ENCODE measurements at regions of chr14 and their contacts with region 1.

Region 1: DNA sequence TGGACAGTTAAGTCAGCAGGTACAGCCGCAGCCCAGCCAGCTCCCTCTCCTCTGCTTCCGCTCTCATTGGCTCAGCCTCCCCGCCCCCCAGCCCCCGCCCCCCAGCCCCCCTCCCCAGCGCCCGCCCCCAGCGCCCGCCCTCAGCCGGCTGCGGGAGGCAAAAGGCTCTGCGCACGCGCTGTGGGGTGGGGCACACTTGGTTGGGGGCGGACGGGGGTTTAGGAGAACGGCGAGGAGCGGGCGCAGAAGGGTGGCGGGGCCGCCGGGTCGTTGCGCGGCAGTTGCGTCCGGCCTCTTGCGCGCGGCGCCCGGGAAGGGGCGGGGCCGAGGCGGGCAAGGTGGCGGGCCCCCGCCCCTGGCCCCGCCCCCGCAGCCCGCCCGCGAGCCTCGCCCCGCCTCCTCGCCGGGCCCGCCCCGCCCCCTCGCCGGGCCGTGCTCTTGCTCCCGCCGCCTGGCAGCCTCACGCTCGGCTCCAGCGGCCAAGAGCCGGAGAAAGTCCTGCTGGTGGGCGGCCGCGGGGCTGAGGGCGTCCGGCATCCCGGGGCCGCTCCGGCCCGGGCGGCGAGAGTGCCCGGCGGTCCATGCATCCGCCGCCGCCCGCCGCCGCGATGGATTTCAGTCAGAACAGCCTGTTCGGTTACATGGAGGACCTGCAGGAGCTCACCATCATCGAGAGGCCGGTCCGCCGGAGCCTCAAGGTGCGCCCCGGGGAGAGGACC is at the start of gene PPP4R4:
- DNase-seq: peak; percentile 90
- H3K4me3 ChIP-seq: peak within 1 kb of the TSS; percentile 48 to 63 (median 61)
- H3K27ac ChIP-seq: peak within 1 kb of the TSS in 3 of 4 donors; percentile 27 to 51 (median 36)
- H3K4me1 ChIP-seq: peaks cover 0 to 22% (median 21%) of the 10 kb centered on the region in 4 donors
- H3K27me3 ChIP-seq: peaks cover 9 to 48% (median 38%) of the 10 kb centered on the region in 3 donors
- CTCF ChIP-seq: no peak
- EP300 ChIP-seq: no peak
- POLR2A ChIP-seq: no peak
- total RNA-seq, gene PPP4R4: 0.27 to 3.0 (median 0.69) TPM

Region 2: DNA sequence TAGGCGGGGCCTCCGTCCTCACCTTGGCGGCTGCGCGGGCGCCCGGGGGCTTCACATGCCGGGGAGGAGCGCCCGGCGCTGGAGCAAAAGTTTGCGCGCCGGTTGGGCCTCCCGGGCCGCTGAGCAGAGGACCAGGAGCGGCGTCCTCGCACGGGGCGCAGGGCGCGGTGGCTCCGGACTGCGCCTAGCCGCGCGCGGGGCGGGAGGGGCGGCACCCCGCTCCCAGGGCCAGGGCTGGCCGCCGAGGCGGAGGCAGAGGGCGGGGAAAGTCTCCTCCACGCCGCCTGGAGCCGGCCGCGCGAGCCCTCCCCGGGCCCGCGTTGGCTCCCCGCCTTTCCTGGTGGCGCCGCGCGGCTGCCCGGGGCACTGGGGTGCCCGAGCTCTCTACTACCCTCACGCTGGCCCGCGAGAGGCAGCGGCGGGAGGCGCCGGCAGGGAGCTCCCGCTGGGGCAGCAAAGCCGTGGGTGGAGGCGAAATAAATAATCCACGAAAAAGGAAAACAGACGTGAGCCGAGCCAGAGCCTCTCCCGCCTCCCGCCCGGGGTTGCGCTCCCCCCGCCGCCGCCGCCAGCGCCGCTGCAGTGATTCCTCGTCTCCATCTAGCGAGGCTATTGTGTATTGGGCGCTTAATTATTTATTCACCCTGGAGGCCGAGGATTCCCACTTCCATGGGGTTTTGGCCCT is 385.4 kb before region 1 on chr14:
- intact Hi-C with region 1: loop called (anchors 10 kb)
- DNase-seq: peak; percentile 88
- H3K4me3 ChIP-seq: peak overlapping the region; percentile 62 to 80 (median 70)
- H3K27ac ChIP-seq: peak overlapping the region; percentile 76 to 90 (median 90)
- H3K4me1 ChIP-seq: peaks cover 0 to 56% (median 37%) of the 10 kb centered on the region in 4 donors
- H3K27me3 ChIP-seq: no peaks in the 10 kb centered on the region
- CTCF ChIP-seq: peak; percentile 15 to 64 (median 53)
- EP300 ChIP-seq: no peak
- POLR2A ChIP-seq: no peak

Region 3: DNA sequence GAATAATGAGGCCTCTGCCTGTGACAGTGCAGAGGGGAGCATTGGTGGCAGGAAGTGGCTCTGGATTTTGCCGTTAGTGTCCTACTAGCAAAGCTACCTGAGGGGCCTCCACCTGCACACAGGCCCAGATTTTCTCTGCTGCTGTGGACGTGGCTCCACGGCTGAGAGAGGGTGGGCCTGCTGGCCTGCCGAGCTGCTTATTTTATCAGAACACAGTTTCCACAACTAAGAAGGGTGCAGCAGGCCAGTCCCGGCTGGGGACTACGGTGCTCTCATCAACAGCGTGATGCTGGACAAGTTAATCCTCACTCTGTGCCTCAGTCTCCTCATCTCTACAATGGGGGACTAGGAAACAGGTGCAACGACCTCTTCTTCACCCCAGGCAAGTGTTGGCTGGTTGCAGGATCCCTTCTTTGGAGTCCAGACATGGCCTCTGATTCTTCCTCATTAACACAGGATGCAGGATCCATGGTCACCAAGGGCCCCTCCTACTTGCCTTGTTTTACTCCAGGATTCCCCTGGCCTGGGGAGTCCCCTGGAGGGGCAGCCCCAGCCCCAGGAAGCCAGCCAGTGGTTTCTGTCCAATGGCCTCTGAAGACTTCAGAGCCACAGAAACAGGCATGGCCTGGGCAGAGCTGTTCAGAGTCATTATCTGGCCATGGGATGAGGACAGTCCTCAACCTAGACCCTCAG is 243.6 kb before region 1 on chr14:
- intact Hi-C with region 1: loop called (anchors 5 kb)
- DNase-seq: no peak
- H3K4me3 ChIP-seq: no peak overlapping the region
- H3K27ac ChIP-seq: no peak overlapping the region
- H3K4me1 ChIP-seq: peaks cover 0 to 34% (median 10%) of the 10 kb centered on the region in 4 donors
- H3K27me3 ChIP-seq: no peaks in the 10 kb centered on the region
- CTCF ChIP-seq: no peak
- EP300 ChIP-seq: no peak
- POLR2A ChIP-seq: no peak

Region 4: DNA sequence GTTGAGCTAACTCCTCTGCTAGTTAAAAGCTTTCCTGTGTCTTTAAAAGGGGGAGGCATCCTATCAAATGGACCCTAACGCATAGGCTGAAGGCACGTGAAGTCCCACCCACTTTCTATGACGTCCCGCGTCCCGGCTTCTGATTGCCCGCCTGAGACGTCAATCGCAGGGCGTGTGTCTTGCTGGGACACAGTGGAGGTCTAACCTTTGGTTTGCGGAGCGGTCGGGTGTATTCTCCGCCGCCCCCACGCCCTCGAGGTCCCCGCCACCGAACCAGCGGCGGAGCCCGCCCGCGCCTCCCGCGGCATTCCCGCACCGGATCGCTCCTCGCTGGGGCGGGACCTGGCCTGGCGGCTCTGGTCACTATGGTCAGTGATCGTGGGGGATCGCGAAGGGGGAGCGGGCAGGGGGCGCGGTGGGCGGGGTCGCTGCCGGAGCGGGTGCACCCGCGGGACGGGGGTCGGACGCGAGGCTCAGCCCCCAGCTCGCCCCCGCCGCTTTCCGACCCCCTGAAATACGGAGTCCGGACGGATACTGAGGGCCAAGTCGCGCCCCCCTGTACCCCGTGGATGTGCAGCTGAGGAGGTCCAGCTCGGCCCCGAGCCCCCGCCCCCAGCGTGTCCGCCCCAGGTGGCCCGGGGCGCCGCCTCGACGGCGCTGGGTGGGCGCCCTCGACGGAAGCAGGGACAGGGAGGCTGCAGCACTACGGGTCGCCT is 147.7 kb before region 1 on chr14 and contains the start of gene OTUB2:
- intact Hi-C with region 1: loop called (anchors 5 kb)
- DNase-seq: peak; percentile 98
- H3K4me3 ChIP-seq: peak within 1 kb of the TSS; percentile 67 to 84 (median 74)
- H3K27ac ChIP-seq: peak within 1 kb of the TSS in 2 of 4 donors; percentile 14 to 16
- H3K4me1 ChIP-seq: peaks cover 0 to 16% (median 10%) of the 10 kb centered on the region in 4 donors
- H3K27me3 ChIP-seq: no peaks in the 10 kb centered on the region
- CTCF ChIP-seq: no peak
- EP300 ChIP-seq: no peak
- POLR2A ChIP-seq: no peak
- total RNA-seq, gene OTUB2: 0.14 to 0.71 (median 0.52) TPM

Region 5: DNA sequence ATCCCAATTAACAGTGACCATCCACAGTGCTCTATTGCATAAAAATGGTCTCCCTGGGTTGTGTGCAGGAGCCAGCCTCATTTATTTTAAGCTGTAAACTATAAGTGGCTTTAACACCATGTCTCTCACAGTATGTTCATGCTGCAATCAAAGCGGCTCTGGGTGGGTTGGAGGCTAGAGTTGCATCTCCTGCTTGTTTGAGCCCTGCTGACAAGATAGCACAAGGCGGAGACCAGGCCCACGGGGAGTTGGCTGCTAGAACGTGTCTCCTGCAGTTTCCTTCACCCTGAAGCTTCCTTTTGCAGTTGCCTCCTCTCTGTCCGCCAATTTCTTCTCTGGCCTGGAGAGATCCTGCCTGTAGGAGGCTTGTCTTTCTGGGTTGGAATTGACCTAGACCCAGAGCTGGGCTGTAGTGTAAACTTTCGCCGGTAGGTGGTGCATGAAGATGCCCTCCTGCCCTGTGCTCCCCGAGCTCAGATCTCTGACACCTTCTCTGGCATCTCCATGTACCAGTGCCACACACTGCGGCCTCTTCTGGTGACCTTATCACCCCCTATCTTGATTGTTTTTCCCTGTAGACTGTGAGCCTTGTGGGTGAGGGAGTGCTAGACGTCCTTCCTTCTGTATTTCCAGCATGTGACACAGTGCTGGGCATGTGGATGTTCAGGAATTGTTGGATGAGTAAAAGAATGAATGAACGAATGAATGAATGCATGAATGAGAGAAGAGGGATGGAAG is 137.6 kb before region 1 on chr14:
- intact Hi-C with region 1: loop called (anchors 5 kb)
- DNase-seq: no peak
- H3K4me3 ChIP-seq: no peak overlapping the region
- H3K27ac ChIP-seq: no peak overlapping the region
- H3K4me1 ChIP-seq: peaks cover 0 to 6% (median 2%) of the 10 kb centered on the region in 4 donors
- H3K27me3 ChIP-seq: no peaks in the 10 kb centered on the region
- CTCF ChIP-seq: peak; percentile 67 to 88 (median 74)
- EP300 ChIP-seq: no peak
- POLR2A ChIP-seq: no peak

Region 6: DNA sequence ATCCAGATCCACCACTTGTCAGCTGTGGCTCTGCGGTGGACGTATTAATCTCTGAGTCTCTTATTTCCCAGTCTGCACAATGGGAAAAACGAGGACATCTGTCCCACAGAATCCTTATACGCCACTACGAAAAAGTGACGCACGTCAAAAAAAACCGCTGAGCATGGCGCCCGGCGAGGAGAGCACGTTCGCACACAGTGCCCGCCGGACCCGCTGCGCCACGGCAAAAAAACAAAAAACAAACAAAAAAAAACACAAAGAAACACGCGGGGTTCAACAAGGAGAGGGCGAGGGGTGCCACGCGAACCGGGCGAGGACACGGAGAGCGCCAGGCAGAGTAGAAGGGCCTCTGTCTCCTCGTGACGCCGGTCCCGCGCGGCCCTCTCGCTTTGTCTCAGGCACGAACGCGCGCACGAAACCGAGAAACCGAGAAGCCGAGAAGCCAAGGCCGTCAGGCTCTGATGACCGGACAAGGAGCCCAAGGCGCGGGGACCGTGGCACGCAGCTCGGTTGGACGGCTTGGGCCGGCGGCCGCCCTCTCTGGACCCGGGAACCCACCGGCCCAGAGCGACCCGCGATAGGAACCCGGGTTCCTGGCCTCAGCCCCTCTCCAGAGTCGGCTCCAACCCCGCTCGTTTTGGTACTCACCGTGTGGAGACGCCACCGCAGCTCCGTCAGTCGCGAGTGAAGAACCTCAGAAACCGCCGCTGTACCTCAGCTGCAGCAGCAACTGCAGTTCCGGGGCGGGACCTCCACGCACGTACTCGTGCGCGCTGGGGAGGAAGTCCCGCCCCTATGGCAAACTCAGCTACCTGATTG is 93.4 kb before region 1 on chr14 and contains the start of gene DDX24:
- intact Hi-C with region 1: loop called (anchors 2 kb)
- DNase-seq: peak; percentile 98
- H3K4me3 ChIP-seq: peak within 1 kb of the TSS; percentile 88 to 98 (median 92)
- H3K27ac ChIP-seq: peak within 1 kb of the TSS; percentile 88 to 97 (median 95)
- H3K4me1 ChIP-seq: peaks cover 0 to 54% (median 46%) of the 10 kb centered on the region in 4 donors
- H3K27me3 ChIP-seq: no peaks in the 10 kb centered on the region
- CTCF ChIP-seq: no peak
- EP300 ChIP-seq: no peak
- POLR2A ChIP-seq: peak; percentile 95 to 99
- total RNA-seq, gene DDX24: 109 to 147 (median 133) TPM

Region 7: DNA sequence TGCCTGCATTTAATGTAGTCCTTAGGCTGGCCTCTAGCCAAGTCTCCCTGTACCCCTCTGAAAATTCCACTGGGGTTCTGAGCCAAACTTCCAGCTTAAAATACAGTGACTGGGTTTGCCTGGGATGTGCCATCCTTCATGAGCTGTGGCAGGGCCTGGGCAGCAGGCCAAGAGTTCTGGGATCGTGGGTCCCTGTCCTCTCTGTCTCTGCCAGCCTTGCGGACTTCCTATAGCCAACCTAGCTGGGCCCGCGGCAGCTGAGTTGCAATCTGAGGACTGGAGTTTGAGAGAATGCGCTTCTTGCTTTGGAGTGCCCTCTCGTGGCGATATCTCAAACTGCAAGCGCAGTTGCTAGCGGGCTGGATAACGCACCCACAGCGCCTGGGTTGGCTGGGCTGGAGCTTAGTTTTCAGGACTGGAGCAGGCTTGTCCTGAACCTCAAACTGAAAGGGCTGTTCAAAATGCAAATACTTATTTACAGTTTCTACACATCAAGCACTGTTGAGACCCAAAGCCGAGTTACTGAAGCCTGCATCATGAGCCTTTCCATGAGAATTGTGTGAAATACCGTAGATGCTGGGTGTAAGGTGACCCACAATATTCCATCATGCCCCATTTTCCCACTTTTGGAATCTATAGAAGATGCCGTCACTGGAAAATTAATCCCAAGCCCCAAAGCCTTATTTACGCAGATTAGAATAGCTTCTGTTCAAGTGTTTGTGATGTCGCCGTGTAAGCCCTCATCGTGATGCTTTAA is 37.3 kb before region 1 on chr14:
- intact Hi-C with region 1: loop called (anchors 2 kb)
- DNase-seq: peak; percentile 91
- H3K4me3 ChIP-seq: no peak overlapping the region
- H3K27ac ChIP-seq: no peak overlapping the region
- H3K4me1 ChIP-seq: peaks cover 0 to 4% (median 0%) of the 10 kb centered on the region in 4 donors
- H3K27me3 ChIP-seq: no peaks in the 10 kb centered on the region
- CTCF ChIP-seq: peak; percentile 74 to 94 (median 88)
- EP300 ChIP-seq: no peak
- POLR2A ChIP-seq: no peak